ENCODE measurements at regions of chr5 and their contacts with region 1.

Region 1: GRCh38 chr5:82641331-82642003 is 363.3 kb upstream of the RPS23 start:
- DNase-seq: peak in 4 of 5 donors; percentile 59 to 70 (median 69)
- ATAC-seq: peak; percentile 80 to 97 (median 95)
- H3K4me3 ChIP-seq: no peak overlapping the region
- H3K27ac ChIP-seq: peak overlapping the region in 3 of 12 donors; percentile 24 to 42 (median 36)
- H3K4me1 ChIP-seq: peaks cover 0 to 24% (median 5%) of the 10 kb centered on the region in 12 donors
- H3K27me3 ChIP-seq: no peaks in the 10 kb centered on the region
- CTCF ChIP-seq: peak; percentile 51 to 86 (median 70)
- POLR2A ChIP-seq: no peak

Region 2: GRCh38 chr5:82656341-82656761 is 14.9 kb after region 1 on chr5:
- intact Hi-C with region 1: no loop called
- DNase-seq: no peak
- ATAC-seq: peak in 1 of 4 donors; percentile 15
- H3K4me3 ChIP-seq: no peak overlapping the region
- H3K27ac ChIP-seq: no peak overlapping the region
- H3K4me1 ChIP-seq: peaks cover 0 to 16% (median 2%) of the 10 kb centered on the region in 12 donors
- H3K27me3 ChIP-seq: no peaks in the 10 kb centered on the region
- CTCF ChIP-seq: no peak
- POLR2A ChIP-seq: no peak

Region 3: DNA sequence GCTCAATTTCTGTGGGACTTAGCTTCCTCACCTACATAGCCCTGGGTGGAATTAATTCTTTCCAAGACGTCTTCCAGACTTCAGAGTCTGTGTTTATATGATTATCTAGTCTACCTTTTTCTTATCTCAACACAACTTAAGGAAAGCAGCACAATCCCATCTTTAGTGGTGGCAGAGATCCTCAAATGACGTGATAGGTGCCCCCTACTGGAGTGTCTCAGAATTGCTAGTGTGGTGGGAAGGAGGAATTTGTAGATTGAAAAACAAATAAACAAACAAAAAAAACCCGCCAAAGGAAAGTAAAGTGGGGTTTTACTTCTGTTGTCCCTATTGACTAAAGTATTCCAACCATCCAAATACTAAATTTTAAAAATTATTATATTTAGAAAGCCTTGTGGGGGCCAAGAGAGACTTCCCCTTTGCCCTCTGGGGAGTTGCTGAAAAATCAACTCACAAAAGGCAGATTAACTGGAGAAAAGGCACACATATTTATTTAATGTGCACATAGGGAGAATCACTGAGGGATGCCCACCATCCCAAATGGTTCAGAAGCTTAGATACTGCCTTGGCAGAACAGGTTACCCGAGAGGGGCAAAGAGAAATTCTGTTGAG is 152.4 kb after region 1 on chr5:
- intact Hi-C with region 1: loop called in 9 of 10 experiments (anchors 2 to 5 kb)
- DNase-seq: no peak
- ATAC-seq: no peak
- H3K4me3 ChIP-seq: no peak overlapping the region
- H3K27ac ChIP-seq: no peak overlapping the region
- H3K4me1 ChIP-seq: no peaks in the 10 kb centered on the region
- H3K27me3 ChIP-seq: no peaks in the 10 kb centered on the region
- CTCF ChIP-seq: peak; percentile 51 to 76 (median 63)
- POLR2A ChIP-seq: no peak

Region 4: DNA sequence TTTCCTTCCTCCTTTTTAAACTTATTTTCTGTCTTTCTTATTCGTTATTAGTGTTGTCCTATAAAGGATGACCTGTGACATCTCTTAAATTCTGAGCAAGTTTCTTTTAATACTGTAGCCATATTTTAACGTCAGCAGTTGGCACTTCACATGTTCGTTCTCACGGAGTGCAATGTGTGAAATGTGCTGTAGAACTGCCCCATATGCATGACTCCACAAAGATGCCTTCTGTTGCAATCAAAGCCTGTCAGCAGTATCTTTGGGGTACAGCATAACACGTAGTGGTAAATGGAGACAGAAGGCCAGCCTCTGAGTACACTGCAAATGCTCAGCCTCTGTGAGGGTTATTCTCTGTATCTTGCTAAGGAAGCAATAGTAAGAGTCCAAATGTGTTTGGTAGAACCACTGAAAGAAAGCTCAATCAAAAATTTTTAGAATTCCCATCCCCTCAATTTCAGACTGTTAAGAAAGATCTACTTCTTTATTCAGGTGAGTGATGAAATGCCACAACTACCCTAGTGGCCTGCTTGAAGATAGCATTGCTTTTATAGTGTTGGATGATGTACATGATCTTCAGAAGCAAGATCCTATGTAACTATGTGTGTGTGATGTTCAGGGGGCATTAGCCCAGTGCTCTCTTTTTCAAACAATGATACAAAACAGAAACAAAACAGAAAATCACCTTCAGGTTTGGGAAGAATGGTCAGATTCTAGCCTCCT is 158.1 kb after region 1 on chr5:
- intact Hi-C with region 1: loop called in 7 of 10 experiments (anchors 5 kb)
- DNase-seq: no peak
- ATAC-seq: no peak
- H3K4me3 ChIP-seq: no peak overlapping the region
- H3K27ac ChIP-seq: no peak overlapping the region
- H3K4me1 ChIP-seq: no peaks in the 10 kb centered on the region
- H3K27me3 ChIP-seq: no peaks in the 10 kb centered on the region
- CTCF ChIP-seq: peak in 1 of 12 donors; percentile 22
- POLR2A ChIP-seq: no peak

Region 5: DNA sequence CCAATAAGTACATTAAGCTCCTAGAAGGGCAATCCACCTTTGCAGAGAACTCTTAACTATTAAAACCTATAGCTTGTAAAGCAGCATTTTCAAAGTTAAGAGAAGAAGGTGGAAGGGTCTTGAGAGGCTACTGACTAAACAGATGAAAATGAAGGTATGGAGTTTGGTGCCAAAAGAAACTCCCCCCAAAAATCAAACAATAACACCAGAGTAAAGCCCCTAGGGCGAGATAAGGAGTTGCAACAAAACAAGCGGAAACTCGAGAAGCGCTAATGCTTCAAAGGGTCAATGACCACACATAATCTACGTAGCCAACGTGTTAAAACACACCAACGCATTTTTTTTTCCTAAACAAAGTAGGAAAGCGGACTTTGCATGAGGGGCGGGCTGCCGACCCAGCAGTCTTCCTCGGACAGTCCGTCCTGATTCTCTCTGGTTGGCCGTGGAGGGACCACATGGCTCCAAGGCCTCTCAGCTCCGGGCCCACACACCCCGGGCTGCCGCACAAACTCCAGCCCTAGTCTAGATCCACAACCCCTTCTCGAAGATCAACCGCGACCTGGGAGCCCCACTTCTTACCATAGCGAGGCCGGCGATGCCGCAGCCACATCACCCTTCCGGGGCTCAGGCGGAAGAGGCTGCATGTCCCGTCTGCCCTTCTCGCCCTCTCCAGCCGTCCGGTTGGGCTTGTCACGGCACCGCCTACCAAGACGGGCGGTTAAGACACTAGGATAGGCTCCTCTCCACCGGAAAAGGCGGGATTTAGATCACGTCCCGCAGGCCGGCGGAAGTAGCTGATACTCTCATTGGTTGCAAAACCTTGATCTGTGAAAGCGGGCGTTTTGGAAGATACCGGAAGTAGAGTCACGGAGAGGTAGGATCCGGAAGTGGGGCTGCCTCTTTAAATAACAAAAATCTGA is 435.5 kb after region 1 on chr5 and contains the starts of genes TMEM167A and XRCC4:
- intact Hi-C with region 1: loop called in 2 of 10 experiments (anchors 2 to 10 kb)
- DNase-seq: peak; percentile 97 to 99 (median 97)
- ATAC-seq: peak; percentile 100
- H3K4me3 ChIP-seq: peak within 1 kb of the TSS; percentile 62 to 97 (median 76)
- H3K27ac ChIP-seq: peak within 1 kb of the TSS; percentile 54 to 95 (median 85)
- H3K4me1 ChIP-seq: peaks cover 0 to 61% (median 37%) of the 10 kb centered on the region in 12 donors
- H3K27me3 ChIP-seq: no peaks in the 10 kb centered on the region
- CTCF ChIP-seq: no peak
- POLR2A ChIP-seq: peak in 1 of 2 donors; percentile 87
- total RNA-seq, gene TMEM167A: 21.4 to 62.7 (median 48.4) TPM
- total RNA-seq, gene XRCC4: 3.3 to 50.5 (median 8.0) TPM

Region 6: DNA sequence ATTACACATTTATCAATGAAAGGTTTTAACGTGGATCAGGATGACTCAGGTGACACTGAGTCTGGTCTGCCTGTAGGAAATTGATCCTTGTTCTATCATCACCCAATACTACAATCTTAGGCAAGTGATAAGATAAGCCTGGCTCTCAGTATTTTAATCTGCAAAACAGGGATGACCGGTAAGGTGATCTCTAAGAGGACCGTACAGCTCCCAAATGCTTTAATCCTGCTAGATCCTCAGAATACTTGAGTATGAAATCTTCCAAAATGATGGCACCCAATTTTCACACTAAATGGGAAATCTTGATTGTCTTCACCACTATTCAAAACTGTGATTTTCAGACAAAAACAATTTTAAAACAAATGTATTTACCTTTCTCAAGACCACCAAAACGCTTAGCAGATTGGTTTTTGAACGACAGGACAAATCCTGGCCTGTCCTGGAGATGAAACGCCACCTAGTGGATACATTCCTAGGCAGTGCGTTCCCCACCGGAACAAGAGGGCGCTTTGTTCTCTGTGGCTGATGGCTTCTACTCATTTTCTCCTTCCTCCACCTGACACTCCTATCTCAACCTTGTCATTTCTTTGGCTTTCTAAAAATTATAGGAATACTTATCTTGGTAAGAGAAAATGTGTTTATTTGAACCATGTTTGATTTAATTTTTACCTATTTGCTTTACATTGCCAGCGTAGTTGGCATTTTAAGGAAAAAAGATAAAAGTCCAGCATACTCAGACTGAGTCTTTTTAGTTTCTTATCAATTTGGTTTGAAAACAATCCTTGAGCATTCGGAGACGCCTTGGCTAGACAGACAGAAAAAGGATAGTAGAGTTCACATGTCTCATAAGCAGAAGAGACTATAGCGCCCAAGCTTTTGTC is 788.9 kb after region 1 on chr5:
- intact Hi-C with region 1: loop called in 5 of 10 experiments (anchors 2 to 10 kb)
- DNase-seq: peak; percentile 34 to 56 (median 53)
- ATAC-seq: peak in 3 of 4 donors; percentile 80 to 88 (median 82)
- H3K4me3 ChIP-seq: no peak overlapping the region
- H3K27ac ChIP-seq: no peak overlapping the region
- H3K4me1 ChIP-seq: peaks cover 0 to 16% (median 0%) of the 10 kb centered on the region in 12 donors
- H3K27me3 ChIP-seq: no peaks in the 10 kb centered on the region
- CTCF ChIP-seq: peak; percentile 70 to 92 (median 84)
- POLR2A ChIP-seq: no peak

Region 7: GRCh38 chr5:83473346-83474163 is 832.1 kb after region 1 on chr5:
- intact Hi-C with region 1: loop called in 6 of 10 experiments (anchors 1 to 5 kb)
- DNase-seq: peak; percentile 85 to 92 (median 88)
- ATAC-seq: peak; percentile 78 to 88 (median 83)
- H3K4me3 ChIP-seq: peak overlapping the region; percentile 34 to 69 (median 56)
- H3K27ac ChIP-seq: peak overlapping the region; percentile 14 to 88 (median 72)
- H3K4me1 ChIP-seq: peaks cover 0 to 54% (median 25%) of the 10 kb centered on the region in 12 donors
- H3K27me3 ChIP-seq: peaks cover 0 to 68% (median 36%) of the 10 kb centered on the region in 9 donors
- CTCF ChIP-seq: peak; percentile 70 to 92 (median 84)
- POLR2A ChIP-seq: no peak

Region 8: GRCh38 chr5:83564069-83564749 is 922.7 kb after region 1 on chr5:
- intact Hi-C with region 1: loop called (anchors 2 to 10 kb)
- DNase-seq: no peak
- ATAC-seq: peak in 3 of 4 donors; percentile 58 to 68 (median 66)
- H3K4me3 ChIP-seq: no peak overlapping the region
- H3K27ac ChIP-seq: peak overlapping the region in 3 of 12 donors; percentile 11 to 50 (median 44)
- H3K4me1 ChIP-seq: peaks cover 0 to 23% (median 4%) of the 10 kb centered on the region in 12 donors
- H3K27me3 ChIP-seq: no peaks in the 10 kb centered on the region
- CTCF ChIP-seq: peak; percentile 53 to 78 (median 67)
- POLR2A ChIP-seq: no peak